ENCODE measurements at regions of chr13 and their contacts with region 1.

Region 1: DNA sequence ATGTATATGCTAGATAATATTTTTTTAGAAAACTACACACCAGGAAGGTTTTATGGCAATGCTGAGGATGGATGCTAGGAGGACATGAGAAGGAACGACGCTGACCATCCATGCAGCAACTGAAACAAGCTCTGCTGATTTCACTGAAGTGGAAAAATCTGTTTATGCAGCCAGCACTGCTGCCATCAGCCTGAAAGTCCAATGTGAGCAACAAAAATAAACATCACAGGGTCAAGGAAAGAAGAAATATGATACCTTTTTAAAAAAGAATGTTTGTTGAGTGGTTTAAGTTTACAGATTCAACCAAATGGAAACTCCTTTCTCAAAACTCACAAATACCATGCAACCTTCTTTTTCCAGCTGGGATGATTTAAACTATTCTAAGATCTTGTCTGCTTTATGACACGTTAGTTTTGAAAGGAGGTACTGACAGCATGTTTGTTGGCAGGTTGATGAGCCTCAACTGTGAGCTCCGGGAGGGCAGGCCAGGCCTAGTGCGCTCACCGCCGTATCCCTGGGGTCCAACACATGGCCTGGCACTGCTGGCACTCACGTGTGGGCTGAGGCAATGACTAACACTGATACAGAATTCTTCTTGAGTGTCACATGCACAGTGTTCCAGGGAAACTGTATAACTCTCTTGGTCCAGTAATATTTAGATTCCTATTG is 46.8 kb downstream of the LATS2 start:
- DNase-seq: no peak
- H3K4me3 Mint-ChIP-seq: no peak overlapping the region
- H3K27ac Mint-ChIP-seq: no peak overlapping the region
- H3K4me1 Mint-ChIP-seq: peaks cover 15% of the 10 kb centered on the region
- H3K27me3 Mint-ChIP-seq: peaks cover 2% of the 10 kb centered on the region

Region 2: DNA sequence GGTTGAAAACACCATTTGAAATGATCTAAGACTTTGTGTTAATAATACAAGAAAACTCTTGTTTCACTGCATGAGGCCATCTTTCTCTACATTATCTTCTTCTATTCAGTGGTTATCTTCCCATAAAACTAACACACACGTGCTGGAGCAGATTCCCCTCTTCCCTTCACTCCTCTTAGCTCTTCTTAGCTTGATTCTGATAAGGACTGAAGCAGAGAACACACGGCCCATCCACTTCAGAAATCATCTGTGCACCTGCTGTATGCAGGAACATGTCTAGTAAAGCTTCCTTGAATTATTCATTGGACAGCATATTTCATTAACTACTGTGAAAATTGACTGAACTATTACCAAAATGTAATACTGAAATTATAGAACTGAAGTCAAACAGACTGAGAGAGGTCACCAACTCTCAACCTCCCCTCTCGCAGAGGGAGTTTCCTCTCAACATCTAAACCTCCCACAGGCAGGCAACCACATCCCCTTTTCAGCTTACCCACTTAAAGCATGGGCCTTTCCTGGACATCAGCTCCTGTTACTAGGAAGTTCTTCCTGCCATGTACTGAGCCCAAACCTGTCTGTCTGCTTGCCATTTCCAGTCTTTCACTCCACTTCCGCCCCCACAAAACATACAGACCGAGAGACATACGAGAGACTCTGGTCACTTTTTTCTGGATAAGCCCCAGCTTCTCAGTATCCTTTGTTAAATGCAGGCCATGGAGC is 602.8 kb before region 1 on chr13:
- CTCF ChIA-PET with region 1: no interaction called
- intact Hi-C with region 1: loop called (anchors 5 kb)
- DNase-seq: peak; percentile 78
- H3K4me3 Mint-ChIP-seq: no peak overlapping the region
- H3K27ac Mint-ChIP-seq: peak overlapping the region; percentile 50
- H3K4me1 Mint-ChIP-seq: peaks cover 21% of the 10 kb centered on the region
- H3K27me3 Mint-ChIP-seq: no peaks in the 10 kb centered on the region

Region 3: DNA sequence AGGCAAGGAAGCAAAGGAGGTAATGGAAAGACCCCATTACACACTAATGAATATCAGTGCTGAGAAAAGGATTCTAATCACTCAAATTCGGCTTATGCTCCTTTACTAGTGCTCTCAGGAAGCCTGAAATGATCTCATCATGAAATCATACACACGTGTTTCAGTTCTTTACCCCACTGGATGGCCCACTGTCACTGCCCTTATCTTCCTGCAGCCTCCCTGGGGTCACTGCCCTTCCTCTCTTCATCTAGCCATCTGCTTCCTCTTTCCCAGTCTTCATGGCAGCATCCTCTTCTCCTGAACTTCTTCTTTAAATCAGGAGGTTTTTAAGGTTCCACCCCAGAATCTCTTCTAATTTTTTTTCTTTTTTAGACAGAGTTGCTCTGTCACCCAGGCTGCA is 212.9 kb before region 1 on chr13:
- CTCF ChIA-PET with region 1: no interaction called
- intact Hi-C with region 1: no loop called
- DNase-seq: no peak
- H3K4me3 Mint-ChIP-seq: no peak overlapping the region
- H3K27ac Mint-ChIP-seq: peak overlapping the region; percentile 21
- H3K4me1 Mint-ChIP-seq: peaks cover 31% of the 10 kb centered on the region
- H3K27me3 Mint-ChIP-seq: no peaks in the 10 kb centered on the region

Region 4: GRCh38 chr13:21060987-21061763 is 46.5 kb after region 1 on chr13 and contains the start of gene LATS2:
- CTCF ChIA-PET with region 1: no interaction called
- intact Hi-C with region 1: loop called (anchors 5 kb)
- DNase-seq: peak; percentile 65
- H3K4me3 Mint-ChIP-seq: peak within 1 kb of the TSS; percentile 75
- H3K27ac Mint-ChIP-seq: no peak within 1 kb of the TSS
- H3K4me1 Mint-ChIP-seq: no peaks in the 10 kb centered on the region
- H3K27me3 Mint-ChIP-seq: peaks cover 21% of the 10 kb centered on the region
- total RNA-seq, gene LATS2: 1.1 to 1.2 TPM

Region 5: DNA sequence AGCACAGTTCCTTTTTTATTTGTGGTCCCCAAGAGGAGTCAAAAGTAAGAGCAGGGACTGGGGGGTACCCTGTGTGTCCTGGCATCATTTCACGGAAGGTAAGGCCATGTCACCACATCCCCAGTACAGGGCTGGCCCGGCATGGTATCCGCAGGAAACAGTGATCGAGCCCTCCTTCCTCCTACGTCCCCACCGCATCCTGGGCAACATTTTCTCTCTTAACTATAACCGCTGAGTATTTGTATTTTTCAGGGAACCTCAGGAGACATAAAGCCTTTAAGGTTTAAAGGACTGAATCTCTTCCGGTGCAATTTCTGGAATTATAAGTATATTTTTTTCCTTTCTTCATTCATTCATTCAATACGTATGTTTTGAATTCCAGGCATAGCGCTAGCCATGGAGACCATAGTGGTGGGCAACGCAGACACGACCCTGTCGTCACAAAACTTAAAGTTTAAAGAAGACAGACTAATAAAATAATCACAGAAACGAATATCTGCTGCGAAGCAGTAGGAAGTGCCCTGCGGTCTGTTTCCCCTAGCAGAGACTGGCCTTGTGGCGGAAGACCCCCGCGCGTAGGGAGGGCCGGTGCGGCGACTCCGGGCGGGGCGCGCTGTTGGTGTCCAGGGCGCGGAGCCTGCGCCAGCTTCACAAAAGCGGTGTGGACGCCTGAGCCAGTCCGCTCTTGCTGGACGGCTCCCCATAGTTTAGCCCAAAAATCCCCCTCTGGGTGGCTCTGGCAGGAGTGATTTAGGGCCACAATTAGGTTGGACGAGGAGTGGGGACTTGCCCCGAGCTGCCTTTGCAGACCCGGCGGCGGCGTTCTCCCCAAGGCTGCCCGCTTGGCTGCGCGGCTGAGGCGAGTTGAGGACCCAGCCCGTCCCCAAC is 60.6 kb after region 1 on chr13:
- CTCF ChIA-PET with region 1: no interaction called
- intact Hi-C with region 1: loop called (anchors 1 kb)
- DNase-seq: peak; percentile 68
- H3K4me3 Mint-ChIP-seq: peak overlapping the region; percentile 66
- H3K27ac Mint-ChIP-seq: no peak overlapping the region
- H3K4me1 Mint-ChIP-seq: peaks cover 11% of the 10 kb centered on the region
- H3K27me3 Mint-ChIP-seq: peaks cover 8% of the 10 kb centered on the region

Region 6: DNA sequence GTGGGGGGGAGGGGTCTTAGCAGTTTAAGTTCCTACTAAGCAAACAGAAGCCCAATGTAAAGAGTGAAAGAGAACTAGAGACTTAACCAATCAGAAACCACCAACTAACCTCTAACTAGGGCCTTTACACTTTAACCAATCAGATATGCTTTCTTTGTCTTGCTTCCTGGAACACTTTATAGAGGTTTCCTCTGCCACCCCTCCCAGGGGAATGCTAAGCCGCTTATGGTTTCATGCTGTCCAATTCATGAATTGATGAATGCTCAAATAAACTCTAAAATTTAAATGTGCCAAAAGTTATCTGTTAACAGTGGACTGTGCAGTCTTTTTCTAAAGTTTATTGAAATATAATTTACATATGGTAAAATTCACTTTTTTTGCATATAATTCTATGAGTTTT is 80.7 kb after region 1 on chr13:
- CTCF ChIA-PET with region 1: no interaction called
- intact Hi-C with region 1: no loop called
- DNase-seq: no peak
- H3K4me3 Mint-ChIP-seq: no peak overlapping the region
- H3K27ac Mint-ChIP-seq: no peak overlapping the region
- H3K4me1 Mint-ChIP-seq: no peaks in the 10 kb centered on the region
- H3K27me3 Mint-ChIP-seq: peaks cover 2% of the 10 kb centered on the region